Mammary epithelial cell (primary cell): ENCODE measurements at regions of chr10 and their contacts with region 1.

Region 1: DNA sequence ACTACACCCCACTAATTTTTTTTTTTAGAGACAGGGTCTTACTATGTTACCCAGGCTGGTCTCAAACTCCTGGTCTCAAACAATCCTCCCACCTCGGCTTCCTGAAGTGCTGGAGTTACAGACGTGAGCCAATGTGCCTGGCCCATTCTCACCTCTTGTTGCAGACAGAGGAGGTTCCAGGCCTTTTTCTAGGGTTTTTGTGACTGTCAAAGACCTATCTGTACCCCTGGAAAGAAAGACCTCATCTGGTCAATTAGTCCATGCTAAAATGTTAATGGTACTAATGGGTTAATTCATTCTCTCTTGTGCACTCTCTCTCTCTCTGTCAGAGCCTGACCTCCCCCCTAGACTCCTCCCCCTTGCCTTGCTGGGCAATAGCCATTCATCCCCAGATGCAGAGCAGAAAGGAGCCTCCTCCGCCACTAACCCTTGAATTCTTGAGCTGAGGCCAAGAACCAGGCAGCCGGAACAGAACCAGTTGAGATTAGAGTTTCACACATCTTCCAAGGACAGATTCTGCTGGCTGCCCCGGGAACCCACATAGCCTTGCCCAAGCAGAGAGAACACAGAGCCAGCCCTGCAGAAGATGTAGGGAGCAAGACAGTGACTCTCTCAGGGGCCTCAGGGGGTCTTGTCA is 209.7 kb downstream of the SKIDA1 start:
- DNase-seq: peak; percentile 69
- H3K4me3 ChIP-seq: no peak overlapping the region
- H3K27ac ChIP-seq: peak overlapping the region; percentile 67
- H3K4me1 ChIP-seq: peaks cover 26% of the 10 kb centered on the region
- H3K27me3 ChIP-seq: no peaks in the 10 kb centered on the region
- CTCF ChIP-seq: no peak

Region 2: DNA sequence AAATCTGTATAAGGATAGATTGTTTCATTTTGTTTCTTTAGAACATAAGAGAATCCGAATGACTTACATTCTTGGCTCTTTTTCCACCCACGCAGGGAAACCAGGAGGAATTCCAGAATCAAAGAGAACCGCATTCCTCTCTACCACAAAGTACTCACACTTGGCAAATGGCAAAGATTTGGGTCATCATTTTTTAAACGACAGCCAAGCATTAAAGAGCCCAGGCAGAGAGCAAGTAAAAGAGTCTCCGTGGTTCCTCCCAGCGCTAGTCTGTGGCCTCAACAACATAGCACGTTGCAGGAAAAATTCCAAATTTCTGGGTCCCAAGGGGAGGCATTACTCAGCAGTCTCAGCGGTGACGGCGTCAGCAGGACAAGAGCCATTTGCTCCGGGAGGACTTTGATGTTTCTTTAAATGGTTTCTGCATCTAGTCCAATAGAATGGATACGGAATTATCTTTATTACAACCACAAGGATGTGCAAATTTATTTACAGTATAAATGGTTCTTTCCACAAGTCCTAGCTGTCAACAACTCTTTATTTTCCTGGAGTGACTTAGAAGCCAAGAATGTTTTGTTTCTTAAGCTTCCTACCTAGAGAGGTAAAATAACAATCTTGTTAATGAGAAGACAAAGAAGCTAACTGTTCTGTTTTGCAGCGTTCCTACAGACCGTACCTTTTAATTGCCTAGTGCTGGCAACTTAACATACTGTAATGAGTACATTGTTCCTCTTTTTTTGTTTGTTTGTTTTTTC is 22.8 kb before region 1 on chr10:
- CTCF ChIA-PET with region 1: no interaction called
- dilution Hi-C with region 1: no loop called
- in situ Hi-C with region 1: no loop called
- intact Hi-C with region 1: loop called (anchors 1 kb)
- DNase-seq: peak; percentile 93
- H3K4me3 ChIP-seq: peak overlapping the region; percentile 33 to 42 (median 35)
- H3K27ac ChIP-seq: peak overlapping the region; percentile 43
- H3K4me1 ChIP-seq: peaks cover 22% of the 10 kb centered on the region
- H3K27me3 ChIP-seq: no peaks in the 10 kb centered on the region
- CTCF ChIP-seq: no peak

Region 3: DNA sequence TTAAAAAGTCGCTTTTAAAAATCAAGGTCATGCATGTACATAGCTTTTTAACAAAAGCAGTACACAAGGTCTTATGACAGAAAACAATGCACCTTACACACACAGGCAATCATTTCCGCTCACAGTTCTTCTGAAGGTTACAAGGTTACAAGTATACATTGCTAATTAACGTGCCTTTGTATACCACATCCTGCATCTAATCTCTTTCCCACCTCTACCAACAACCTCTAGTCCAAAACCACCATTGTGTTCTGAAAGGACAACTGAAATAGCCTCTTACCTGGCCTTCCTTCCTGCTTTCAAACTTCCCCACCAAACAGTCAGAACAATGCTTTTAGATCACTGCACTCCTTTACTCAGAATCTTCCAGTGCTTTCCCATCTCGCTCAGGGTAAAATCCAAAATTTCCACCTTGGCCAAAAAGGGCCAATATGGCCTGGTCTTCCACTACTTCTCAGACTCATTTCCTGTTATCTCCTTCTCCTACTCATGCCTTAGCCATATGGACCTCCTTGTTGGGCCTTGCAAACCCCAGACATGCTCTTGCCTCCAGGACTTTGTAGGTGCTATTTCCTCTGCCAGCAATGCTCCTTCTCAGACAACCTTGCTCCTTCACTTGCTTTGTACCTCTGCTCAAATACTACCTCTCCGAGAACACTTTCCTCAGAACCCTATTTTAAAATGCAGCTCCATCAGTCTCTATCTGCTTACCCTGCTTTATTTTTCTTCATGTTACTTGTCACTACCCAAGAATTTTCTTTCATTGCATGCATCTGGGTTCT is 482.4 kb after region 1 on chr10:
- CTCF ChIA-PET with region 1: no interaction called
- dilution Hi-C with region 1: no loop called
- in situ Hi-C with region 1: no loop called
- intact Hi-C with region 1: no loop called
- DNase-seq: no peak
- H3K4me3 ChIP-seq: no peak overlapping the region
- H3K27ac ChIP-seq: no peak overlapping the region
- H3K4me1 ChIP-seq: no peaks in the 10 kb centered on the region
- H3K27me3 ChIP-seq: no peaks in the 10 kb centered on the region
- CTCF ChIP-seq: no peak